Activated CD8-positive, alpha-beta T cell treated with anti-CD3 and anti-CD28 coated beads, Interleukin-2, amount 10 ng/mL, durations not matched to agents 7 days and 5 days (primary cell): ENCODE measurements at regions of chr14 and their contacts with region 1.

Region 1: GRCh38 chr14:35944847-35945246 is 118.7 kb downstream of the BRMS1L start:
- DNase-seq: peak; percentile 44
- ATAC-seq: no peak
- H3K4me3 Mint-ChIP-seq: no peak overlapping the region
- H3K27ac Mint-ChIP-seq: no peak overlapping the region
- H3K4me1 Mint-ChIP-seq: peaks cover 15% of the 10 kb centered on the region
- H3K27me3 Mint-ChIP-seq: no peaks in the 10 kb centered on the region

Region 2: DNA sequence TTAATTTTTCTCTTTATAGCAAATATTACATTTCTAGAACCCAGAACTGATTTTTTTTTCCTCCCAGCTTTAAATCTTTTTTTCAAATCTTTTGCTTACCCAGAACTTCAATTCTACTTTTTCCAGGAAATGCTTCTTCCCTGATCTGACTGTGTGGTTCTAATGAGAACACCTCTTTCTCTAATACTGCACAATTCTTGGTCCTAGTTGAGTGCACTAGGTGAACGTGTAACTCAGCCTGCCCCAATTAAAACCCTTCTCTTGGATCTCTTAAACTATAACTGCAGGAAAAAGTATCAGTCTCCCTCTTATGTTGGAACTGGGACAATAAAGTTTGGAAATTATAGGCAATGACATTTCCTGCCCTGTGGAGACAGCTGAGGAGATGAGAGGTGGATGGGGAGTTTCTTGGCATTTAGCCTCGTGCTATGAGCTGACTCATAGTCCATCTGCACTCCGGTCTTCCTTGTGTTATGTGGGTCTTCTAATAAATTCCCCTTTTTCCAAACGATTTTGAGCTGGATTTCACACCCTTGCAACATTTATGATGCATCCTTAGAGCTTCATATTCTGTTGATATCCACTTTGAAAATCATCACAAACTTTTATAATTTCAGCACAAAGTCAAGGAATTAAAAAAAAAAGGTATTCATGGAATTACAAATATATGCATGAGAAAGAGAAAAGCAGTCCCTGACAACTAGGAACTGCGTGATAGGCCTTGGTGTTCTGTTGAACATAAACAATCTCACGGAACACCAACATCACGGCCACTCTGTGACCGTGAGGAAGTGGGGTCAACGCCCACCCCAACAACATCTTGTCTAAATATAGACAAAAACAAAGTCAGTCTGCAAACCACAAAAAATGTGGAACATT is 66.3 kb before region 1 on chr14:
- CTCF ChIA-PET with region 1: interaction called, 44 read pairs
- POLR2A ChIA-PET with region 1: no interaction called
- DNase-seq: no peak
- ATAC-seq: no peak
- H3K4me3 Mint-ChIP-seq: no peak overlapping the region
- H3K27ac Mint-ChIP-seq: no peak overlapping the region
- H3K4me1 Mint-ChIP-seq: peaks cover 13% of the 10 kb centered on the region
- H3K27me3 Mint-ChIP-seq: no peaks in the 10 kb centered on the region

Region 3: DNA sequence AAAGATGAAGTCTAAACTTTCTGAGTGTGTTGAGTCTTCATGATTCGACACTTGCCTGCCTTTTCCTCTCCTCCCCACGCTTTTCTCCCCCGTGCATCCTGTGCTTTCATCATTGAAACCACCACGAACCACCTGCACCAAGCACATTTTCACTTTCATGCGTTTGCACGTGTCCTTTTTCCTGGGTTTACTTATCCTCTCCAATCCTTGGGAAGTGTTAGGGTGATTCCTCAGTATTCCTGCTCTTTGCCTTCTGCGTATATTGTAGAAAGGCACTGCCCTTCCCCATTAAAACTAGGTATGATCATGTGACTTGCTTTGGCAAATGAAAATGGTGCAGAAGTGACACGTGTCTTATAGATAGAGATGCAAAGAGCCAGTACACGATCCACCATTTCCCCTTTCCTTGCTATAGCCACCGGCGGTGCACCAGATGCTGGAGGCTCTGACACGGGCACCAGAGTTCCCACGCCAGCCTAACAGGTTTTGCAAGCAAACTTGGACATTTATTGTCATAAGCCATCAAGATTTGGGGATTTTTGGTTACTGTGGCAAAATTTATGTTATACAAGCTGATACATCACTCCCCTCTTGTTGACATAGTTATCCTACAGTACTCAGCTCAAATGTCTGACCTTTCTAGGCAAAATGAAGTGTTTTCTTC is 12.1 kb before region 1 on chr14:
- CTCF ChIA-PET with region 1: interaction called, 27 read pairs
- POLR2A ChIA-PET with region 1: no interaction called
- DNase-seq: peak; percentile 73
- ATAC-seq: peak; percentile 84
- H3K4me3 Mint-ChIP-seq: peak overlapping the region; percentile 65
- H3K27ac Mint-ChIP-seq: peak overlapping the region; percentile 91
- H3K4me1 Mint-ChIP-seq: peaks cover 48% of the 10 kb centered on the region
- H3K27me3 Mint-ChIP-seq: no peaks in the 10 kb centered on the region

Region 4: DNA sequence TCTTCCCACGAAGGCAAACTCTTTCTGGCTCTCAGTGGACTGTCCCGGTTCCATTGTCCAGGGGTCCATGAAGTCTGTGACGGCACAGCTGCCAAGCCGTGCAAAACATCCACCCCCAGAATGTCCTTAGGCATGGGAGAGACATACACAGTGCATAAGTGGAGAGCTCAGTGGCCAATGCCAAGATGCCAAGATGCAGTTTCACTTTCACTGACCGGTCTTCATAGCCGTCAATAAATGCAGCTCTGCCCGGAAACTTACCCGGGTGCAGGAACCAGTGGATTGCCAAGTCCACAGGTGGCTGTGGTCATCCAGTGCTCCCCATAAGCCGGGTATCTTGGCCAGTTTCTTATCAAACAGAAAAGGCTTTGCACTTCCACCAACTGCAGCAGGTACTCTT is 69.4 kb after region 1 on chr14:
- CTCF ChIA-PET with region 1: no interaction called
- POLR2A ChIA-PET with region 1: no interaction called
- DNase-seq: no peak
- ATAC-seq: no peak
- H3K4me3 Mint-ChIP-seq: no peak overlapping the region
- H3K27ac Mint-ChIP-seq: no peak overlapping the region
- H3K4me1 Mint-ChIP-seq: no peaks in the 10 kb centered on the region
- H3K27me3 Mint-ChIP-seq: peaks cover 7% of the 10 kb centered on the region